ENCODE measurements at regions of chr7 and their contacts with region 1.

Region 1: GRCh38 chr7:141533149-141533949 is 17.9 kb upstream of the AGK start:
- DNase-seq: no peak
- ATAC-seq: peak; percentile 89
- H3K4me3 ChIP-seq: no peak overlapping the region
- H3K27ac ChIP-seq: no peak overlapping the region
- H3K4me1 ChIP-seq: no peaks in the 10 kb centered on the region
- H3K27me3 ChIP-seq: no peaks in the 10 kb centered on the region
- CTCF ChIP-seq: peak; percentile 88 to 97 (median 95)
- EP300 ChIP-seq: no peak
- POLR2A ChIP-seq: no peak
- RAD21 ChIP-seq: peak; percentile 90

Region 2: GRCh38 chr7:140517546-140518369 is 1015.6 kb before region 1 on chr7:
- CTCF ChIA-PET with region 1: interaction called, 3 read pairs
- POLR2A ChIA-PET with region 1: no interaction called
- RAD21 ChIA-PET with region 1: no interaction called
- SMC1A ChIA-PET with region 1: no interaction called
- in situ Hi-C with region 1: no loop called
- intact Hi-C with region 1: loop called (anchors 5 kb)
- DNase-seq: peak; percentile 23
- ATAC-seq: peak; percentile 94
- H3K4me3 ChIP-seq: no peak overlapping the region
- H3K27ac ChIP-seq: no peak overlapping the region
- H3K4me1 ChIP-seq: no peaks in the 10 kb centered on the region
- H3K27me3 ChIP-seq: no peaks in the 10 kb centered on the region; a peak in 2 of 4 replicates
- CTCF ChIP-seq: peak; percentile 71 to 83 (median 73)
- EP300 ChIP-seq: no peak
- POLR2A ChIP-seq: no peak
- RAD21 ChIP-seq: peak; percentile 57

Region 3: DNA sequence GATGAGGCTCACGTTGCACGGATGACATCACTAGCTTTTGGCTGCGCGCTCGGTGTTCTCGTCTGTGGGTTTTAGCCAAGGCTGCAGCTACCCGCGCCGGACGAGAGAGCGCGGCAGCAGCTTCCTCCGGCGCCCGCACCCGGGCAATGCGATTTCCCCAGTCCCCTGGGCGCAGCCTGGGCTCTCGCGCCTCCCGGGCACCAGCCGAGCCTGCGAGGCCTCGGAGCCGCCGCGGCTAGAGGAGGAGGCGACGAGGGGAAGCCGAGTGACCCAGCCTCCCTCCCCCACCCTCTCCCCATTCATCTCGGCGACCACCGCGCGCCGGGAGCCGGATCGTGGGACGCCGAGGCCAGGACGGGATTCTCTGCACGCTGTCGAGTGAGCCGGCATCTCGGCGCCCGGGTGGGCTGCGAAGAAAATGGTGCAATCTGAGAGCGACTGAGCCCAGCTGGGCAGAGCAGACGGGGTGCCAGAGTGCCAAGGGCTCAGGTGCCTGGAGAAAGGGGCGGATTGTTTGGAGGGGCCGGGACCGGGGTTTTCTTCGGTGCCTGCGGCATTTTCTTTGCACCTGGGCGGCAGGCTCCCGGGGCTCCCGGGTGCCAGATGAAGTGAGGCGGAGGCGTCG is 460.7 kb before region 1 on chr7:
- CTCF ChIA-PET with region 1: interaction called, 6 read pairs
- POLR2A ChIA-PET with region 1: no interaction called
- RAD21 ChIA-PET with region 1: interaction called, 3 read pairs
- SMC1A ChIA-PET with region 1: no interaction called
- in situ Hi-C with region 1: no loop called
- intact Hi-C with region 1: loop called (anchors 5 kb)
- DNase-seq: no peak
- ATAC-seq: peak; percentile 48; the same call in 2 of the 3 replicates
- H3K4me3 ChIP-seq: no peak overlapping the region
- H3K27ac ChIP-seq: no peak overlapping the region
- H3K4me1 ChIP-seq: no peaks in the 10 kb centered on the region
- H3K27me3 ChIP-seq: peaks cover 3 to 22% of the 10 kb centered on the region in 2 experiments
- CTCF ChIP-seq: no peak
- EP300 ChIP-seq: no peak
- POLR2A ChIP-seq: no peak
- RAD21 ChIP-seq: no peak

Region 4: DNA sequence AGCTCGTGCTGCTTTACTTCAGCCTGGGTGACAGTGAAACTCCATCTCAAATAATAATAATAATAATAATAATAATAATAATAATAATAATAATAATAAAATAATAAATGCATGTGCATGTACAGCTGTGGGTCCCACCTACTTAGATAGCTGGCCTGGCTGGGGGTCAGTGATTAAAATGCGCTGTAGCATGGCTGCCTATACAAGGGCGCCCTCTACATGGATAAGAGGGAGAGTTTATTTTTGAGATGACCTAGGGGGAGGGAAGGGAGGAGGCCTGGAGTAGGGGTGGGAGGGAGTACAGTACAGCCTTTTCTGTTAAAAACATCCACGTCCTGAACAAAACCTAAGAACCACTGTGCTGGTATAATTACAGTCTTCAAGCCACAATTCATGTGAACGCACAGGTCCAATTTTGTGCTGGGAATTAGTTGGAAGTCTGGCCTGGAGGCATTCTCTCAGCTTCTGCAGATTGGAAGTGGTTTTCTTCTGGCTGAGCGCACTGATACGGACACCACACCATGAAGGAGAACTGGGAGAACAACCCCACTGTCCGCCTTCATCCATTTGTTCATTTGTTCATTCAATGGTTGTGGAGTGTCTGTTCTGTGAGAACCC is 313.0 kb before region 1 on chr7:
- CTCF ChIA-PET with region 1: interaction called, 4 read pairs
- POLR2A ChIA-PET with region 1: no interaction called
- RAD21 ChIA-PET with region 1: no interaction called
- SMC1A ChIA-PET with region 1: interaction called, 3 read pairs
- in situ Hi-C with region 1: no loop called
- intact Hi-C with region 1: loop called (anchors 10 kb)
- DNase-seq: no peak
- ATAC-seq: peak; percentile 87
- H3K4me3 ChIP-seq: no peak overlapping the region
- H3K27ac ChIP-seq: no peak overlapping the region
- H3K4me1 ChIP-seq: no peaks in the 10 kb centered on the region
- H3K27me3 ChIP-seq: no peaks in the 10 kb centered on the region; a peak in 1 of 4 replicates
- CTCF ChIP-seq: peak; percentile 21 to 53 (median 42); a peak in 4 of 6 replicates
- EP300 ChIP-seq: no peak
- POLR2A ChIP-seq: no peak
- RAD21 ChIP-seq: peak; percentile 72

Region 5: DNA sequence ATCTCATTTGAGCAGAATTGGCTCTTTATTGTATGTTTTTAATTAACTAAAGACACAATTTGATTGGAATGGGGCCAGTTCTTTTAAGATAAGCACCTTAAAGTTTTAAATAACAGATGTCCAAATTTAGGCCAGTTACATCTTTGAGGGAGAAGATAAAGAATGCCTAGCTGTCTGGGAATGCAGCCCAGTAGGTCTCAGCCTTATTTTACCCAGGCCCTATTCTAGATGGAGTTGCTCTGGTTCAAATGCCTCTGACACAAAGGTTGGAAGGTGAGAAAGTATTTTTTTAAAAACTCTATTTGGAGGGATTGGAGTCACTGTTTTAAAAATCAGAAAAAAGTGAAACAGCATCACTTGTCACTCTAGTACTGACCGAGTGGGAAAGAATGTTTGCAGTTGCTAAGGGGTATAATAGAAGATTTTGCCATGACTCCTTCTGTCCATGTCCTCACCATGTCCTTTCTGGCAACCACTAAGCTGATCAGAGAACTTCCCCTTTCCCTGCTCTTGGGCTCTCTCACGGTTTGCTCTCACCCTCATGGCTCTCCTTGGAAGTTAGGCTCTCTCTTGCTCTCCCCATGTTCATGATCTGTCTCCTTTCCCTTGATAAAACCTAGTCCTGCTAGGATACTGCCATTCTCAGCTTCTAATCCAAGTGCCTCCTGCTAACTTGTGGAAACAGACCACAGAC is 220.4 kb before region 1 on chr7:
- CTCF ChIA-PET with region 1: no interaction called
- POLR2A ChIA-PET with region 1: no interaction called
- RAD21 ChIA-PET with region 1: no interaction called
- SMC1A ChIA-PET with region 1: no interaction called
- in situ Hi-C with region 1: no loop called
- intact Hi-C with region 1: loop called (anchors 10 kb)
- DNase-seq: no peak
- ATAC-seq: no peak
- H3K4me3 ChIP-seq: no peak overlapping the region
- H3K27ac ChIP-seq: no peak overlapping the region
- H3K4me1 ChIP-seq: no peaks in the 10 kb centered on the region
- H3K27me3 ChIP-seq: no peaks in the 10 kb centered on the region
- CTCF ChIP-seq: no peak
- EP300 ChIP-seq: no peak
- POLR2A ChIP-seq: no peak
- RAD21 ChIP-seq: no peak

Region 6: DNA sequence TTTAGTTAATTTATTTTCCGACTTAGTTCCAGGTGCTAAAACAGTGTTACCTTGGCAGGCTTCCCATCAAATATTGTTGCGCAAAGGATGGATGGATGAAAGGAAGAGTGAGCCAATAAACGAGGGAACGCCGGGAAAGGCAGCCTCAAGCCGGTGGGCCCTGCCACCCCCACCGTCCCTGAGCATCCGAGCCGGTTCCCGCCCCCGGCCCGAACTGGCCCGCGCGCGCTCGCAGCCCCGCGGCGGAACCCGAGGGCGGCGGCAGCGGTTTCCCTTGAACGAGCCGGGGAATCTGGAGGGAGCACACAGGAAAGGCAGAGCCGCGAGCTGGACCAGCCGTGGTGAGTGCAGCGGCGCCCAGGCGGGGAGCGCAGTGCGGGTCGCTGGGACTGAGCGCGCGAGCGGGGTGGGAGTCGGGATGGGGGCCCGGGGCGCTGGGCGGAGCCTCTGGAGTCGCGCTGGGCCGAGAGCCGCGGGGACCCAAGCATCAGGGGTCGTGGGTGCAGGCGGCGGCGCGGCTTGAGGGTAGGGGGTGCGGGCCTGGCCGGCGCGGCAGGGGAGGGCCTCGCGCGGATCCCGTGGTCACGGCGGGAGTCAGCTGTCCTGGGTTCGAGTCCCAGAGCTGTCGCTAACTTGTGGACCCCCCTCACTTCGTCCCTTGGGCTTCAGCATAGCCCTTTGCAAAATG is 17.9 kb after region 1 on chr7 and contains the start of gene AGK:
- CTCF ChIA-PET with region 1: interaction called, 21 read pairs
- POLR2A ChIA-PET with region 1: interaction called, 3 read pairs
- RAD21 ChIA-PET with region 1: no interaction called
- SMC1A ChIA-PET with region 1: interaction called, 5 read pairs
- in situ Hi-C with region 1: no loop called
- intact Hi-C with region 1: no loop called
- DNase-seq: no peak
- ATAC-seq: peak; percentile 96
- H3K4me3 ChIP-seq: peak within 1 kb of the TSS; percentile 84
- H3K27ac ChIP-seq: peak within 1 kb of the TSS; percentile 84
- H3K4me1 ChIP-seq: peaks cover 8% of the 10 kb centered on the region
- H3K27me3 ChIP-seq: no peaks in the 10 kb centered on the region
- CTCF ChIP-seq: no peak
- EP300 ChIP-seq: no peak
- POLR2A ChIP-seq: peak; percentile 97
- RAD21 ChIP-seq: no peak
- polyA plus RNA-seq, gene AGK: 32.5 to 34.1 TPM

Region 7: GRCh38 chr7:141674702-141675101 is 141.4 kb after region 1 on chr7:
- CTCF ChIA-PET with region 1: no interaction called
- POLR2A ChIA-PET with region 1: no interaction called
- RAD21 ChIA-PET with region 1: no interaction called
- SMC1A ChIA-PET with region 1: no interaction called
- in situ Hi-C with region 1: no loop called
- intact Hi-C with region 1: no loop called
- DNase-seq: no peak
- ATAC-seq: peak; percentile 70
- H3K4me3 ChIP-seq: no peak overlapping the region
- H3K27ac ChIP-seq: no peak overlapping the region
- H3K4me1 ChIP-seq: no peaks in the 10 kb centered on the region
- H3K27me3 ChIP-seq: no peaks in the 10 kb centered on the region
- CTCF ChIP-seq: peak; percentile 17 to 38 (median 23); a peak in 3 of 6 replicates
- EP300 ChIP-seq: no peak
- POLR2A ChIP-seq: no peak
- RAD21 ChIP-seq: 0 out of 2 replicates have a peak, but pooled peaks have one; percentile 11

Measured in GM12878 (cell line).